GM10248 (cell line): ENCODE measurements at regions of chr10 and their contacts with region 1.

Region 1: DNA sequence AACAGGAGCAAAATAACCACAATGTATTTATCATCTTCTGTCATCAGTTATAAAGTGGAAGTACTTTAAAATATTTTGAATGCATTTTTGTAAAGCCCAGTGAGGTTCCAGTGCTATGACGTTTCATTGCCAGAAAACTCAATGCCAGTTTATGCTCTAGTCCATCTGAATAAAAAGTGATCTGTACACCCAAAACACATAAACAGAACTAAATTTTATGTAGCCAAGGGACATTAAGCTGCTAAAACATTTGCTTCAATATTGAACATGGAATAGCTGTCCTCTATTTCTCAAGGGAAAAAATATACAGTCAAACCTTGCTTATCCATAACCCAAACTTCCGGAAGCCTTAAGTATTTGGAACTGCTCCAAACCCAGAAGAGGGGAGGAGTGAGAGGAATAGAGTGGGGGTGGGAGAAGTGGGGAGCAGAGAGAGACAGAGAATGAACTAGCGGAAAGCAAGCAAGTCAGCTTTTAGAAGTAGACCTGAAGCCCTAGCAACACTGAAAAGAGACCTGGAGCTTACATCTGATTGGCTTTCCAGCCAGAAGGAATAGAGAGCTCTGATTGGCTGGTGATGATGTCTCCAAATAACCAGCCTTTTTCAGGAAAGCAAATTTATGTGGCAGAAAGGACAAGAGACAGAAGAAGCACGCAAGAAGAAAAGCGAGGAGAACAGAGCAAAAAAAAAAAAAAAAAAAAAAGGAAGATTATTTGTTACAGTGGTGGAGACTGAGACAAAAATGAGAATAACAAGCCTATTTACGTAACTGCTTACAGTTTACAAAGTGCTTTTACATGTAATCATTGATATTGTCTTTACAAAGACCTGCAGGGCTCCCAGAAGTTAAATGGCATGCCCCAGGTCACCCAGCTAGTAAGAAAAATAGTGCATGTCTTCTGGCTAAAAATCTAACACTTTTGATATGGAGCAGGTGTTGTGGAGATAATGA is 196.0 kb downstream of the RNLS start:
- DNase-seq: peak; percentile 54
- CTCF ChIP-seq: no peak

Region 2: GRCh38 chr10:87861953-87862678 is 525.0 kb before region 1 on chr10:
- CTCF ChIA-PET with region 1: interaction called, 22 read pairs
- POLR2A ChIA-PET with region 1: interaction called, 3 read pairs
- DNase-seq: peak; percentile 91
- CTCF ChIP-seq: no peak

Region 3: DNA sequence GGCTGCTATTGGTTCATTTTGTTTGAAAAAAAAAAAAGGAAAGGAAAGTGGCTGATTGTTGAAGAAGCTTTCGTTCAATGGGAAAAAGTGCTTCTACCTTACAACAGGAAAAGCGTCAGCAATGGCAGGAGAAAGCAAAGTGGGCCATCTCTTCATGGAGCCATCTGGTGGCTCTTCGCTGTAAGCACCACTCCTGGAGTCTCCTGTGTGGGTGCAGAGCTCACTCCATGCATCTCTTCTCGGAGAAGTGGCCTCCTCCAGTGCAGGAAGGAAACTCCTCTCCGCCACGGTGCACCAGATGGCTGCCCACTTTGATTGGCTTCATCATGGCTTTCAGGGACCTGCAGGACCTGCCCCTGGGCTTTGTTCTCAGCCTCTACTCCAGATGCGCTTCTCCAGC is 272.7 kb before region 1 on chr10:
- CTCF ChIA-PET with region 1: interaction called, 18 read pairs
- POLR2A ChIA-PET with region 1: no interaction called
- DNase-seq: peak; percentile 50
- CTCF ChIP-seq: peak; percentile 78

Region 4: GRCh38 chr10:88372051-88372715 is 14.9 kb before region 1 on chr10:
- CTCF ChIA-PET with region 1: interaction called, 37 read pairs
- POLR2A ChIA-PET with region 1: no interaction called
- DNase-seq: no peak
- CTCF ChIP-seq: no peak

Region 5: DNA sequence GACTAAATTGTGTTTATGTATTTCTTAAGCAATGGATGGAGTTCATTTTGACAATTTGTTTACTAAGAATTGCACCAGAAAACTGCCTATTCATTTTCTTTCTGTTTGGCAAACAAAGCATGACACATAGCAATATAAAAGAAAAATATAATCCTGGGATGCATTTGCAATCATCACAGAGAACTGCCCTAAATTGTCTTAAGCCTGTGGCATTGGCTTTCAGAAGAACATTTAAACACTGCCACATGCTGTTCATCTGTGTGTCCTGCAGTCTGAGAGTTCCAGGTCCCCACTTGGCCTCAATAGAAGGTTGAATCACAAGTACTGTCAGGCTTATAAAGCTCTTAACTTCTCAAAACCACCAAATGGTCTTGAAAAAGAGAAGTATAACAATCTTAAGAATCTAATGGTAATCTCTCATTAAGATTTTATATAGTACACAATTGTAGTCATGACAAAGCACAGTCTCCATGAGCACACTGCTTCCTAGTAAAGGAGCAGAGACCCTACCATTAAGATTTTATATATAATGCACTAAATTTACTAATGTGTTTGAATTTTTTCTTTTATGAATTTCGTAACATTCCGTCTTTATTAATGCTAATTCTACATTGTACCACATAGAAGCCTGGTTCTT is 166.1 kb after region 1 on chr10:
- CTCF ChIA-PET with region 1: interaction called, 14 read pairs
- POLR2A ChIA-PET with region 1: no interaction called
- DNase-seq: peak; percentile 60
- CTCF ChIP-seq: peak; percentile 91